ENCODE measurements at regions of chrX and their contacts with region 1.

Region 1: DNA sequence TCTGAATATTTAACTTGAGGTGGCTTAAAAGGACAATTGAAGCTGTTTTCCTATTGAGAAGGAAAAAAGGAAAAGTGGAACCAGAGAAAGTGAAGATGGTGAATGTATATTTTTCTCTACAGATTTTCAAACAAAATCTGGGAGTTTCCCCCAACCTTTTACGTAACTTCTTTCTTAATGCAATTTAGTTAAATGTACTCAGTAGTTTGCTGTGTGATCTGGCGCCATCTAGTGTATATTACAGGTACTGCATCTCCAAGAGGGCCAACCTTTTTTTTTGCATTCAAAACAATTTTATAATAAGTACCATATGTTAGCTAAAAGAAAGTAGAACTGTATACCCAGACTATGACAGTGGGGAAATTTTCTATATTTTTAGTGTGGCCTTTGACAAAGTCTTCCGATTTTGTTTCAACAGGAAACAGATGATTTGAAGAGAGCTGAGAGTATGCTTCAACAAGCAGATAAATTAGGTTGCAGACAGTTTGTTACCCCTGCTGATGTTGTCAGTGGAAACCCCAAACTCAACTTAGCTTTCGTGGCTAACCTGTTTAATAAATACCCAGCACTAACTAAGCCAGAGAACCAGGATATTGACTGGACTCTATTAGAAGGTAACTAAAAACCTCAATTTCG is 82.0 kb downstream of the PLS3 start:
- DNase-seq: peak in 3 of 6 donors; percentile 9 to 54 (median 28)
- ATAC-seq: peak in 3 of 4 donors; percentile 65 to 90 (median 83)
- H3K4me3 ChIP-seq: no peak overlapping the region
- H3K27ac ChIP-seq: no peak overlapping the region
- H3K4me1 ChIP-seq: no peaks in the 10 kb centered on the region
- H3K27me3 ChIP-seq: peaks cover 0 to 3% (median 0%) of the 10 kb centered on the region in 4 donors
- CTCF ChIP-seq: peak; percentile 94 to 99 (median 98)

Region 2: DNA sequence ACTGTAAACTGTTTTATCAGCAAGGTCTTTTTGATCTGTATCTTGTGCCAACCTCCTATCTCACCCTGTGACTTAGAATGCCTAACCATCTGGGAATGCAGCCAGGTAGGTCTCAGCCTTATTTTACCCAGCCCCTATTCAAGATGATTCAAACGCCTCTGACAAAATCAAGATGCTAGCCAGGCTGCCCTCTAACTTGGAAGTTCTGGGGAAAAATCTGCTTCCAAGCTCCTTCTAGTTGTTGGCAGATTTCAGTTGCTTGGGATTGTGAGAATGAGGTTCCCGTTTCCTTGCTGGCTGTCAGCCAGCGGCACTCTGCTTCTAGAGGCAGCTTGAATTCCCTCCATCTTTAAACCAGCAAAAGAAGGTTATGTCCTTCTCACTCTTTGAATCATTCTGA is 318.8 kb before region 1 on chrX:
- intact Hi-C with region 1: loop called in 1 of 3 experiments (anchors 10 kb)
- DNase-seq: peak in 1 of 6 donors; percentile 57
- ATAC-seq: no peak
- H3K4me3 ChIP-seq: no peak overlapping the region
- H3K27ac ChIP-seq: no peak overlapping the region
- H3K4me1 ChIP-seq: no peaks in the 10 kb centered on the region
- H3K27me3 ChIP-seq: peaks cover 0 to 6% (median 0%) of the 10 kb centered on the region in 4 donors
- CTCF ChIP-seq: no peak

Region 3: DNA sequence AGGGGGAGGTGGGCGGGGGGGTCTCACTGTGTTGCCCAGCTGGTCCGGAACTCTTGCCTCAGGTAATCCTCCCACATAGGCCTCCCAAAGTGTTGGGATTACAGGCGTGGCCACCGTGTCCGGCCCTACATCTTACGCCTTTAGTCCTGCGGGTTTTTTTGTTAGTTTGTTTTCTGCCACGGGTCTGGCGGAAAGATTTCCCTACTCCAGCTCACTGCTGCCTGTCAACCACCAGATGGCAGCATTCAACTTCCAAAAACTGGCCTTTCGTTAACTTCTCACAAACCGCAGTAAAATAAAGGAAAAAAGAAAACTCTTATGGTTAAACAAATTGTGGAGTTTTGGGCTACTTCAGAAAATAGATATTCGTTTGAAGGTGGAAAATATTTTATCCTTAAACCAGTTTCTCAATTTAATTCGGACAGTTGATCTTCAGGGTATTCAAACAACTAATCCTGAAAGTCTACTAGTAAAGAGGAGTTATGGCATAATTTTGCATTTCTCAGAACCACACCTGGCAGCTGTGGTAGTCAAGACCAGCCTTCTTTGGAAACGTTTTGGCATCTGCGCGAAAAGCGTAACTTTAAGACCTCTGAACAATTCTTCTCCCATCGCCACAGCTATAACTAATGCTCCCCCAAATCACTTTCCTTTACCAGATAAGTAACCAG is 312.4 kb before region 1 on chrX:
- intact Hi-C with region 1: loop called in 2 of 3 experiments (anchors 5 to 10 kb)
- DNase-seq: peak in 4 of 6 donors; percentile 2 to 58 (median 27)
- ATAC-seq: peak; percentile 72 to 84 (median 82)
- H3K4me3 ChIP-seq: no peak overlapping the region
- H3K27ac ChIP-seq: no peak overlapping the region
- H3K4me1 ChIP-seq: no peaks in the 10 kb centered on the region
- H3K27me3 ChIP-seq: peaks cover 0 to 21% (median 0%) of the 10 kb centered on the region in 4 donors
- CTCF ChIP-seq: peak; percentile 65 to 87 (median 78)

Measured in pancreas (tissue), 10 donors.